B cell (primary cell): ENCODE measurements at regions of chr1 and their contacts with region 1.

Region 1: GRCh38 chr1:203702130-203702577 is 62.8 kb upstream of the LAX1 start:
- DNase-seq: peak; percentile 78
- ATAC-seq: peak; percentile 64
- H3K4me3 ChIP-seq: no peak overlapping the region
- H3K4me3 Mint-ChIP-seq: no peak overlapping the region
- H3K27ac ChIP-seq: no peak overlapping the region
- H3K27ac Mint-ChIP-seq: no peak overlapping the region
- H3K4me1 ChIP-seq: peaks cover 0 to 9% of the 10 kb centered on the region in 2 donors
- H3K4me1 Mint-ChIP-seq: peaks cover 2% of the 10 kb centered on the region
- H3K27me3 ChIP-seq: no peaks in the 10 kb centered on the region
- H3K27me3 Mint-ChIP-seq: no peaks in the 10 kb centered on the region
- CTCF ChIP-seq: peak; percentile 90

Region 2: DNA sequence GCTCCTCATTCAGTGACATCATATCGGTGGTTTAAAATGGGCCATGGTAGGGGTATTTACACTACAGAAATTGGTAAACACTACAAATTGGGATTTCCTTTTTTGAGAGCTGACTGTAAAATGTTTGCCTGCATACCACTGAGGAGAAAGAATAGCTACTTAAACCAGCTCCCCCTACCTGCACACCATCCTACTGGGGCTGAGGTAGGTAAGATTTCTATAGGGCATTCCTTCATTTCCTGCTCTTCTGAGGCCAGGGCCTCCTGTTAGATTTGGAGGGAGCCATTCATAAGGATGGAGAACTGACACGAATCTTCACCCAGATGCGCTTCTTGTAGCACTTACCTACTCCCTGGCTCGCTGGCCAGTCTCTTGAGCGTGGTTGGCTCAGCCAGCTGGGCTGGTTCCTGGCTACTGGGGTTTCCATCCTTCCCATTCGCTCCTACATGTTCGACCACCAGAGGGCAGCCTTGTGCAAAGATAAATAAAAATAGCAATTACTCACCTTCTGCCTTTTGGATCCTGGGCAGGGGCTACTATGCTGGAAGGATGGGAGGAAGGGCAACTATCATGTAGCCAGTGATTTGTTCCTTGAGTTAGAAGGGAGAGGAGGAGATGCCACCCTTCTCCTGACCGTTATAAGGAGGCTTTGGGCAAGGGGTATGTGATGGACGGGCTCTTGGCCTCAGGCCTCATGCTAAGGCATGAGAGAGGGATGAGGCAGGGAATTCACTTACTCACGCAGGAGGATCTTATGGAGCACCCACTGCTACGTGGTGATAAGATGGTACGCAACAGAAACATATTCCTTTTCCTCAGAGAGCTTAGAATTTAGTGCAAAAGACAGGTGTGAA is 197.5 kb before region 1 on chr1:
- CTCF ChIA-PET with region 1: interaction called, 267 read pairs
- POLR2A ChIA-PET with region 1: no interaction called
- intact Hi-C with region 1: no loop called
- DNase-seq: peak; percentile 80
- ATAC-seq: peak; percentile 72
- H3K4me3 ChIP-seq: no peak overlapping the region
- H3K4me3 Mint-ChIP-seq: no peak overlapping the region
- H3K27ac ChIP-seq: no peak overlapping the region
- H3K27ac Mint-ChIP-seq: no peak overlapping the region
- H3K4me1 ChIP-seq: no peaks in the 10 kb centered on the region
- H3K4me1 Mint-ChIP-seq: peaks cover 2% of the 10 kb centered on the region
- H3K27me3 ChIP-seq: peaks cover 0 to 7% (median 0%) of the 10 kb centered on the region in 4 experiments
- H3K27me3 Mint-ChIP-seq: peaks cover 16% of the 10 kb centered on the region
- CTCF ChIP-seq: peak; percentile 93

Region 3: DNA sequence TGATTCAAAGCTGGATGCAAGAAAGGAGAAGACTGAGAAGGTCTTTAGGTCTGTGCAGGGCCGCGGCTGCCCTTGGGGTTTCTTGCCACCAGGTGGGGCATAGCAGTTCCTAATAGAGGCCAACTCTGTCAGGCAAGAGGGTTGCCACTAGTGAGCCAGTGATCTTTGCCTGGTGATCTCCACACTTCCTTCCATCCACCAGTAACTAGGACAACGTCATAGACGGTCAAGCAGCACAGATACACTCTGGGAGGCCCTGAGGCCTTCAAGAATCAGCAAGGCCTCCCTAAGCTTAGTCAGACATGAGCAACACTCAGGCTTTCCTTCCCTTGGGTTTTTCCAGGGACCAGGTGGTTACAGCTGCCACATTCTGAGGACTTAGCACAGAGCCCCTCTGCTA is 108.4 kb before region 1 on chr1:
- CTCF ChIA-PET with region 1: interaction called, 83 read pairs
- POLR2A ChIA-PET with region 1: no interaction called
- intact Hi-C with region 1: no loop called
- DNase-seq: peak; percentile 48
- ATAC-seq: peak; percentile 45
- H3K4me3 ChIP-seq: no peak overlapping the region
- H3K4me3 Mint-ChIP-seq: no peak overlapping the region
- H3K27ac ChIP-seq: no peak overlapping the region
- H3K27ac Mint-ChIP-seq: no peak overlapping the region
- H3K4me1 ChIP-seq: no peaks in the 10 kb centered on the region
- H3K4me1 Mint-ChIP-seq: no peaks in the 10 kb centered on the region
- H3K27me3 ChIP-seq: peaks cover 0 to 3% (median 1%) of the 10 kb centered on the region in 4 experiments
- H3K27me3 Mint-ChIP-seq: peaks cover 17% of the 10 kb centered on the region
- CTCF ChIP-seq: peak; percentile 52

Region 4: DNA sequence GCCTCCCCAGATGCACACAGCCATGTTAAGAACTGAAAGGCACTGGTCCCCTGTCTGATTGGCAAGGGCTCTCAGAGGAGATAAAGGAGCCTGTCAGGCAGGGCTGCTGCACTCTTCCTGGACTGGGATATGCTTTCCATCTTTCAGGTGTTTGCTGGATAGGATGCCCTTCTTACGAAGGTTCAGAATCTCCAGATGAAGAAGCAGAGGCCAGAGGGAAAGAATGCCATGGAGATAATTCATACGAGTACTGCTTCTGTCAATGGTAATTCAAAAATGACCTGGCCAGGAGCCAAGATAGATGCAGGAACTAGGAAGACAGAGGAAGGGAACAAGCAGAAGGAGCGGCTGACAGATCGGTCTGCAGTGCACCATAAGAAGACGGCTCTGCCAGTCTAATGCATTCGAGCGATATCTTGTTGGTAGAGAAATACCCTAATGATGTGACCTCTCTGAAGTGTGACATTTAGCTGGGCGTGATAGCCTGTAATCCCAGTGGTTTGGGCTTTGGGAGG is 92.1 kb before region 1 on chr1:
- CTCF ChIA-PET with region 1: interaction called, 7 read pairs
- POLR2A ChIA-PET with region 1: no interaction called
- intact Hi-C with region 1: loop called (anchors 1 kb)
- DNase-seq: no peak
- ATAC-seq: no peak
- H3K4me3 ChIP-seq: no peak overlapping the region
- H3K4me3 Mint-ChIP-seq: no peak overlapping the region
- H3K27ac ChIP-seq: no peak overlapping the region
- H3K27ac Mint-ChIP-seq: no peak overlapping the region
- H3K4me1 ChIP-seq: peaks cover 7 to 15% of the 10 kb centered on the region in 2 donors
- H3K4me1 Mint-ChIP-seq: peaks cover 14% of the 10 kb centered on the region
- H3K27me3 ChIP-seq: no peaks in the 10 kb centered on the region
- H3K27me3 Mint-ChIP-seq: no peaks in the 10 kb centered on the region
- CTCF ChIP-seq: no peak

Region 5: GRCh38 chr1:203713125-203713524 is 11.0 kb after region 1 on chr1:
- CTCF ChIA-PET with region 1: interaction called, 12 read pairs
- POLR2A ChIA-PET with region 1: no interaction called
- intact Hi-C with region 1: no loop called
- DNase-seq: no peak
- ATAC-seq: no peak
- H3K4me3 ChIP-seq: no peak overlapping the region
- H3K4me3 Mint-ChIP-seq: no peak overlapping the region
- H3K27ac ChIP-seq: no peak overlapping the region
- H3K27ac Mint-ChIP-seq: no peak overlapping the region
- H3K4me1 ChIP-seq: no peaks in the 10 kb centered on the region
- H3K4me1 Mint-ChIP-seq: no peaks in the 10 kb centered on the region
- H3K27me3 ChIP-seq: no peaks in the 10 kb centered on the region
- H3K27me3 Mint-ChIP-seq: no peaks in the 10 kb centered on the region
- CTCF ChIP-seq: no peak

Region 6: GRCh38 chr1:203769505-203770343 is 67.6 kb after region 1 on chr1:
- CTCF ChIA-PET with region 1: interaction called, 20 read pairs
- POLR2A ChIA-PET with region 1: no interaction called
- intact Hi-C with region 1: no loop called
- DNase-seq: no peak
- ATAC-seq: no peak
- H3K4me3 ChIP-seq: no peak overlapping the region
- H3K4me3 Mint-ChIP-seq: no peak overlapping the region
- H3K27ac ChIP-seq: no peak overlapping the region
- H3K27ac Mint-ChIP-seq: no peak overlapping the region
- H3K4me1 ChIP-seq: peaks cover 4 to 17% of the 10 kb centered on the region in 2 donors
- H3K4me1 Mint-ChIP-seq: peaks cover 22% of the 10 kb centered on the region
- H3K27me3 ChIP-seq: peaks cover 0 to 2% (median 0%) of the 10 kb centered on the region in 4 experiments
- H3K27me3 Mint-ChIP-seq: no peaks in the 10 kb centered on the region
- CTCF ChIP-seq: no peak

Region 7: DNA sequence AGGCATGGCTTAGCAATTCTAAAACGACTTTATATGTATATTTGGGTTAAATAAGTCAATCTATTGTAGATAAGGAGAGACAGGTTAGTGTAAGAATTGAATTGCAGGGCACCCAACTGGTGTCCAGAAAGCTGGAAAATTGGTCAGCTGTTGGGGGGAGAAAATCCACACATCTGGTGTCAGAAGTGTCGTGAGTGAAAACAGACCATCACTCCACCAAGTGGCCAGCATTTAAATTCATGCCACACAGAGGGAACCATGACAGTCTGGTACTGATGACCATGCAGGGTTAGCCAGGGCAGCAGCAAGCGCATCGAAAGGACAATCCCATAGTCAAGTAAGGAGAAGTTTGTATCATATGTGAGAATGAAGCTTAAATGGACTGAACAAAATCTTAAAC is 74.5 kb after region 1 on chr1:
- CTCF ChIA-PET with region 1: interaction called, 25 read pairs
- POLR2A ChIA-PET with region 1: no interaction called
- intact Hi-C with region 1: loop called (anchors 1 kb)
- DNase-seq: no peak
- ATAC-seq: peak; percentile 36
- H3K4me3 ChIP-seq: no peak overlapping the region
- H3K4me3 Mint-ChIP-seq: no peak overlapping the region
- H3K27ac ChIP-seq: peak overlapping the region in 1 of 2 donors; percentile 57
- H3K27ac Mint-ChIP-seq: no peak overlapping the region
- H3K4me1 ChIP-seq: peaks cover 0 to 6% of the 10 kb centered on the region in 2 donors
- H3K4me1 Mint-ChIP-seq: peaks cover 15% of the 10 kb centered on the region
- H3K27me3 ChIP-seq: peaks cover 0 to 2% (median 0%) of the 10 kb centered on the region in 4 experiments
- H3K27me3 Mint-ChIP-seq: no peaks in the 10 kb centered on the region
- CTCF ChIP-seq: no peak